OCI-LY7 (cell line): ENCODE measurements at regions of chr3 and their contacts with region 1.

Region 1: DNA sequence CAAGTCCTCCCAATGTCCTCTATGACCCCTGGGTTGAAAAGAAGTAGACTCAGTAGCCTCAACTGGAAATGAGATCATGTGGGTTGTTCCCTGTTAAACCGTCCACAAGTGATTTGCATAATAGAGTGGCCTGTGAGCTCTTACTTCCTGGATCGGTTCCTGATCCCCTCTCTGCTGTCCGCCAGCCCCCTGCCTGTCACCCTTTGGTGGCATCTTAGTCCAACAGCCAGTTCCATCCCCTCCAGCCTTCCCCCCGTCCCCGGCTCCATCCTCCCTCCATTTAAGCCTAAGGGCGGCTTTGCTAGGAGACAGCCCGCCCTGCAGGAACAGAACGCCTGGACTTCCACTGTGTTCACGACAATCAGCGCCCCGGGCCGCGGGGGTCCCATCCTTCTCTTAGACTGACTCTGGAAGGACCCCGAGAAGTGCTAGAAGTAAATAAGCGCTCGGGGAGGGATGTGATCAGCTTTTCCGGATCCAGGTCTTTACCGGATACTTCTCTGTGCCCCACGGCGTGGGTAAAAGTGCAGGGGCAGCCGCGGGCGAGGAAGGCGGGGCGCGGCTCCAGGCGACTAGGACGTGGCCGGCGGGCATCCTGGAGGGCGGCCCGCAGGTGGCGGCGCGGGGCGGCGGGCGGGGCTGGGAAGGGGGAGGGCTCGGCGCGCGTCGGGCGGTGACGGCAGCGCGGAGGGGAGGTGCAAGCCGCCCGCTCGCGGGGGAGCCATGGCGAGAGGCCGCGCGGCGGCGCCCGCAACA is 51.2 kb upstream of the ULK4 start:
- DNase-seq: peak; percentile 97
- H3K4me3 ChIP-seq: peak overlapping the region; percentile 94
- H3K27ac ChIP-seq: peak overlapping the region; percentile 98
- H3K4me1 ChIP-seq: peaks cover 56% of the 10 kb centered on the region
- CTCF ChIP-seq: peak; percentile 29; the same call in 1 of the 2 replicates

Region 2: GRCh38 chr3:41961750-41962679 is 51.1 kb before region 1 on chr3 and contains the start of gene ULK4:
- CTCF ChIA-PET with region 1: no interaction called
- POLR2A ChIA-PET with region 1: interaction called, 5 read pairs
- intact Hi-C with region 1: loop called (anchors 1 kb)
- DNase-seq: peak; percentile 100
- H3K4me3 ChIP-seq: peak within 1 kb of the TSS; percentile 93
- H3K27ac ChIP-seq: peak within 1 kb of the TSS; percentile 68
- H3K4me1 ChIP-seq: peaks cover 12% of the 10 kb centered on the region
- CTCF ChIP-seq: no peak
- total RNA-seq, gene ULK4: 21.0 and 39.3 TPM in 2 replicates

Region 3: GRCh38 chr3:42032693-42033349 is 19.7 kb after region 1 on chr3:
- CTCF ChIA-PET with region 1: no interaction called
- POLR2A ChIA-PET with region 1: interaction called, 30 read pairs
- intact Hi-C with region 1: loop called (anchors 2 kb)
- DNase-seq: no peak
- H3K4me3 ChIP-seq: no peak overlapping the region
- H3K27ac ChIP-seq: no peak overlapping the region
- H3K4me1 ChIP-seq: peaks cover 33% of the 10 kb centered on the region
- CTCF ChIP-seq: no peak

Region 4: GRCh38 chr3:42071904-42072592 is 58.9 kb after region 1 on chr3:
- CTCF ChIA-PET with region 1: no interaction called
- POLR2A ChIA-PET with region 1: interaction called, 13 read pairs
- intact Hi-C with region 1: loop called (anchors 2 kb)
- DNase-seq: peak; percentile 80
- H3K4me3 ChIP-seq: peak overlapping the region; percentile 61
- H3K27ac ChIP-seq: peak overlapping the region; percentile 74
- H3K4me1 ChIP-seq: peaks cover 74% of the 10 kb centered on the region
- CTCF ChIP-seq: no peak

Region 5: GRCh38 chr3:42190701-42191462 is 177.8 kb after region 1 on chr3:
- CTCF ChIA-PET with region 1: no interaction called
- POLR2A ChIA-PET with region 1: no interaction called
- intact Hi-C with region 1: loop called (anchors 2 kb)
- DNase-seq: peak; percentile 84
- H3K4me3 ChIP-seq: no peak overlapping the region
- H3K27ac ChIP-seq: peak overlapping the region; percentile 92
- H3K4me1 ChIP-seq: peaks cover 63% of the 10 kb centered on the region
- CTCF ChIP-seq: peak; percentile 99